BJ (cell line): ENCODE measurements at regions of chr6 and their contacts with region 1.

Region 1: GRCh38 chr6:9717568-9717967 is 697.3 kb downstream of the TFAP2A start:
- DNase-seq: no peak
- H3K4me3 ChIP-seq: no peak overlapping the region
- H3K27me3 ChIP-seq: no peaks in the 10 kb centered on the region
- CTCF ChIP-seq: no peak

Region 2: DNA sequence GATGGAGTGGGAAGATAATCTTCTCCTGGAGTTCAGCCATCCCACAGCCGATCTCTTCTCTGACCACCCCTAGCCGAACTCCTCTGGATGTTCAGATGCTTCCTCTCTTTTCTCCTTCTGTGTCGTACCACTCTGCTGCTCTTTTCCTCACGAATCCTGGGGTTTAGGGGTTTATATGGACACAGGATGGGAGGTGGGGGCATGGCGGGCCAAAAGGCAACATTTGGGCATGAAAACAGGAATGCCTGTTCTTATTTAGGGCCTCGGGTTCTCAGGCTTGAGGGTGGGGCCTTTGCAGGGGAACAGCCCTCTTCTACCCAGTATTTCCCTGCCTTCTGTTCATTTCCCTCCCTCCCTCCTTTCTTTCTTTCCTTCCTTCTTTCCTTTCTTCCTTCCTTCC is 1394.9 kb before region 1 on chr6:
- CTCF ChIA-PET with region 1: no interaction called
- POLR2A ChIA-PET with region 1: interaction called, 19 read pairs
- DNase-seq: no peak
- H3K4me3 ChIP-seq: no peak overlapping the region
- H3K27me3 ChIP-seq: no peaks in the 10 kb centered on the region
- CTCF ChIP-seq: no peak

Region 3: GRCh38 chr6:9842004-9842725 is 124.6 kb after region 1 on chr6:
- CTCF ChIA-PET with region 1: no interaction called
- POLR2A ChIA-PET with region 1: no interaction called
- DNase-seq: no peak
- H3K4me3 ChIP-seq: no peak overlapping the region
- H3K27me3 ChIP-seq: no peaks in the 10 kb centered on the region
- CTCF ChIP-seq: no peak

Region 4: DNA sequence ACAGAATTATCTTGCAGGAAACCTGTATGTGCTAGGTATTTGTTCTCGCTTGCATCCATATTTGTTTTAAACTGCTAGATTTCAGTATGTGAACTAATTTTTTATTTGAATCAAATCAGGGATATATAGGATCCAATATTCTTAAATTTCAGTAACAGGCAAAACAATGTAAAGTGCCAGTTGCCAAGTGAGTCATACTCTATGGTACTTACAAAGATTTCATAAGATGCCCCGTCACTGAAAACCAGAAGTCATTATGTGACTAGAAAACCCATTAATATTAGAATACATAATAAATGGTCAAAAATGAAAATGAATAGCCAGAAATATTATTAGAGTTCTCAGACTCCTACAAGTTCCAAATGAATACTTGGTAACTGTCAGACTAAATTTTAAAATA is 216.1 kb after region 1 on chr6:
- CTCF ChIA-PET with region 1: no interaction called
- POLR2A ChIA-PET with region 1: no interaction called
- DNase-seq: no peak
- H3K4me3 ChIP-seq: no peak overlapping the region
- H3K27me3 ChIP-seq: no peaks in the 10 kb centered on the region
- CTCF ChIP-seq: no peak

Region 5: GRCh38 chr6:10060004-10060403 is 342.4 kb after region 1 on chr6:
- CTCF ChIA-PET with region 1: no interaction called
- POLR2A ChIA-PET with region 1: no interaction called
- DNase-seq: no peak
- H3K4me3 ChIP-seq: no peak overlapping the region
- H3K27me3 ChIP-seq: no peaks in the 10 kb centered on the region; the same call in 1 of the 2 replicates
- CTCF ChIP-seq: no peak